K562 (cell line): ENCODE measurements at regions of chr12 and their contacts with region 1.

Region 1: GRCh38 chr12:110468212-110469048 is at the starts of genes FAM216A and GPN3:
- DNase-seq: peak; percentile 89 to 99 (median 93)
- ATAC-seq: peak; percentile 89
- H3K4me3 ChIP-seq: peak within 1 kb of the TSS; percentile 59
- H3K27ac ChIP-seq: peak within 1 kb of the TSS; percentile 97
- H3K4me1 ChIP-seq: peaks cover 25 to 30% of the 10 kb centered on the region in 2 experiments; a peak in 4 of 5 replicates
- H3K27me3 ChIP-seq: no peaks in the 10 kb centered on the region
- CTCF ChIP-seq: no peak; a peak in 1 of 6 replicates
- EP300 ChIP-seq: peak; percentile 83
- POLR2A ChIP-seq: peak; percentile 79
- RAD21 ChIP-seq: no peak; a peak in 1 of 4 replicates
- polyA plus RNA-seq, gene FAM216A: 17.2 to 30.1 TPM
- polyA plus RNA-seq, gene GPN3: 105 to 123 TPM

Region 2: GRCh38 chr12:110449799-110450497 is 18.5 kb before region 1 on chr12 and contains the start of gene ARPC3:
- CTCF ChIA-PET with region 1: no interaction called
- POLR2A ChIA-PET with region 1: interaction called, 22 read pairs
- in situ Hi-C with region 1: no loop called
- intact Hi-C with region 1: loop called (anchors 2 kb)
- DNase-seq: peak; percentile 86 to 97 (median 89)
- ATAC-seq: peak; percentile 97
- H3K4me3 ChIP-seq: peak within 1 kb of the TSS; percentile 60
- H3K27ac ChIP-seq: peak within 1 kb of the TSS; percentile 82
- H3K4me1 ChIP-seq: peaks cover 6 to 13% of the 10 kb centered on the region in 2 experiments; a peak in 3 of 5 replicates
- H3K27me3 ChIP-seq: no peaks in the 10 kb centered on the region
- CTCF ChIP-seq: peak; percentile 94 to 97 (median 95)
- EP300 ChIP-seq: 0 out of 2 replicates have a peak, but pooled peaks have one; percentile 20
- POLR2A ChIP-seq: peak; percentile 94
- RAD21 ChIP-seq: peak; percentile 94 to 96
- polyA plus RNA-seq, gene ARPC3: 450 to 575 TPM

Region 3: DNA sequence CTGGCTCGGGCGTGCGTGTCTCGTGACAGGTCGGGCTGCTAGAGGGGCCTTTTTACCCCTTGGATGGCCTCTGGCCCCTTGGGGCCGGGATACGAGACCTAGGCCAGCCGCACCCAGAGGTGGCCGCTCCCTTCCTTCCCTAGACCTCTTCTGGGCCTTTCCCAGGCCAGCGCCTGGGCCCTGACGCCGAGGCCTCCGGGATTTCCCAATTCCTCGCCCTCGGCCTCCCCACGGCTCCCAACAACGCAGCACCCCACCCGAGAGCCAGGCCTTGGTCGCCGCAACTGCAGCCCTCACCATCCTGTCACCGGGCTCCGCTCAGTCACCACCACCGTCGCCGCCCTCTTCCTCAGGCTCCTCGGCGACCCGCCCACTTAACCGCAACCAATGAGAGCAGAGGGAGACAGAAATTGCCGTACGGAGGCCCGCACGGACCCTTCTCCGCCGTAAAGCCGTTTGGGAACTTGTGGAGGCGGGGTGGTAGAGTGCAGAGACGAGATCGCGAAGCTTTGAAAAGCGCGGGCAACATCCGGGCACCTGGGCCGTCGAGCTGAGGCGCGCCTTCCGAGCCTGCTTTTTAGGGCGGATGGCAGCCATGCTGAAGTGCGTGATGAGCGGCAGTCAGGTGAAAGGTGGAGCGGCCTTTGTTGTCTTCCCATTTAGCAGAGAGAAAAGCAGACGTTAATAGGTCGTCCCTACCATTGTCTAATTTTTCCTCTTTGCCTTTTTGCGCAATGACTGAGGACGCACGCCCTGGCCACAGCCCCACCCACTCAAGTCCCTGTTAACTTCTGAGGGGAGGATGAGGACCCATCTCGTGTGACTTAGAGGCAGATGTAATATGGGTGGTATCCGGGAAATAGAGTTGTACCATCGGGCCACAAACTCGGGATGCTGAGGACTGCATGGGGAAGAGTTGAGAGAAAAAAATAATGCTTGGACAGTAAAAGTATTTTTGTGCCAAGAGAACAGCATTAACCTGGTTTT is 33.6 kb after region 1 on chr12 and contains the starts of genes RAD9B and VPS29:
- CTCF ChIA-PET with region 1: no interaction called
- POLR2A ChIA-PET with region 1: interaction called, 9 read pairs
- in situ Hi-C with region 1: no loop called
- intact Hi-C with region 1: loop called (anchors 1 kb)
- DNase-seq: peak; percentile 93 to 99 (median 95)
- ATAC-seq: peak; percentile 96
- H3K4me3 ChIP-seq: peak within 1 kb of the TSS; percentile 62
- H3K27ac ChIP-seq: peak within 1 kb of the TSS; percentile 89
- H3K4me1 ChIP-seq: peaks cover 13 to 18% of the 10 kb centered on the region in 2 experiments
- H3K27me3 ChIP-seq: no peaks in the 10 kb centered on the region
- CTCF ChIP-seq: no peak
- EP300 ChIP-seq: peak; percentile 67
- POLR2A ChIP-seq: peak; percentile 97
- RAD21 ChIP-seq: no peak
- polyA plus RNA-seq, gene RAD9B: 0.49 to 0.83 TPM
- polyA plus RNA-seq, gene VPS29: 550 to 638 TPM

Region 4: GRCh38 chr12:110606253-110606611 is 137.8 kb after region 1 on chr12:
- CTCF ChIA-PET with region 1: interaction called, 15 read pairs
- POLR2A ChIA-PET with region 1: interaction called, 4 read pairs
- in situ Hi-C with region 1: loop called (anchors 5 kb)
- intact Hi-C with region 1: no loop called
- DNase-seq: no peak
- ATAC-seq: no peak
- H3K4me3 ChIP-seq: no peak overlapping the region
- H3K27ac ChIP-seq: no peak overlapping the region
- H3K4me1 ChIP-seq: no peaks in the 10 kb centered on the region
- H3K27me3 ChIP-seq: no peaks in the 10 kb centered on the region
- CTCF ChIP-seq: no peak
- EP300 ChIP-seq: no peak
- POLR2A ChIP-seq: no peak
- RAD21 ChIP-seq: no peak